ENCODE measurements at regions of chr17 and their contacts with region 1.

Region 1: DNA sequence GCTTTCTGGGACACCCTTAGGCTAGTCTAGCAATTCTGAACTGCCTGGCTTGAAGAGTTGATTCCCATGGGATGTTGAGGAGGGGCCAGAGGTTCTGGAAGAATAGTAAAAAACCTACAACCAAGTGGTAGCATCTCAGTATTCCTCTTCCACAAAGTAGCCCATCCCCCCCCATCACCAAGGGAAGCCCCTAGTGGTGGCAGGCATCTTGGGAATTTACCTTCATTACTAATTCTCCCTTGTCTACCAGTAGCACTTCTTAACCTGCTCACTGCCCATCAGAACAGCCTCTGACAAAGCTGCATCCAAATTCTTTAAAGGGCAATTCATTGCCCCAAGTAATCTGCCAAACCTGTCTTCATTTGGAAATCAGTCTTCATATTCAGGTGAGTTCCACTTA is 12.8 kb upstream of the RAB11FIP4 start:
- DNase-seq: no peak
- ATAC-seq: no peak
- H3K4me3 Mint-ChIP-seq: no peak overlapping the region
- H3K27ac Mint-ChIP-seq: no peak overlapping the region
- H3K4me1 Mint-ChIP-seq: no peaks in the 10 kb centered on the region
- H3K27me3 Mint-ChIP-seq: no peaks in the 10 kb centered on the region
- CTCF ChIP-seq: no peak

Region 2: DNA sequence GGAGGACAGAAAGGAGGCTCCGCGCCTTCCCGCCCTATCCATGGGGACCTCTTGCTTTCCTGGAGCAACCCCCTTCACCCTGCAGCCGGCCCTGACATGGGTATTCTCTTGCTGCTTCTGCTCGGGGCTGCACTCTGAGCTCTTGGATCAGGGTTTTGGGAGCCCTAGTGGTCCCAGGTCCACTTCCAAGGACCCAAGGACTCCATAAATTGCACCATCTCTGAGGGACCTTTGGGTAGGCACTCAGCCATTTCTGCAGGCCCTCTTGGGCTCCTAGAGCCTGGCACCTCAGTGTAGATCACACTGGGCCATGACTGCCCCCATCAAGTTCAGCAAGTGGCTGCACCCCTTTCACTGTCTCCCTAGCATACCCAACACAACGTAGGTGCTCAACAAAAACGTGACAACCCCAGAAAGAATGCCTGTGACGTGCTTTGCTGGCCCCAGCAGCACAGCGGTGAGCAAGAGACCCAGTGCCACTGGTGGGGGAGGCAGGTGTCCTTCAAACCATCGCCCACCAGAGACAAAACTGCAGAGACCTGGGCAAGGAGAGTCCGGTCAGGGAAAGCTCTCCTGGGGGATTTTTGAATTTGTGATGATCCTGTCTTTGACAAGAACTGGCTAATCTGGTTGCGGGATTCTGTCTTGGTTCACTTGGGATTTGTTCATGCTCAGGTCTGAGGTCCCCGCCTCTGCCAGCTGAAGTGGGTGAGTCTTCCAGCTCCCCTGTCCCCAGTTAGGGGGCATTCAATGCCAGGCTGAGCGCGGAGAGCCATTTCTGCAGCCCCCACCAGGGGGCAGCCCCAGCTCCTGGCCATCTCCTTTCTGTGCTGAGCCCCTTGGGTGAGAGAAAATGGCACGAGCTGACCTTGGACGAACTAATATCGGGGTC is 10.4 kb after region 1 on chr17:
- CTCF ChIA-PET with region 1: interaction called, 11 read pairs
- POLR2A ChIA-PET with region 1: no interaction called
- intact Hi-C with region 1: no loop called
- DNase-seq: peak; percentile 59
- ATAC-seq: peak; percentile 69
- H3K4me3 Mint-ChIP-seq: no peak overlapping the region
- H3K27ac Mint-ChIP-seq: no peak overlapping the region
- H3K4me1 Mint-ChIP-seq: peaks cover 5% of the 10 kb centered on the region
- H3K27me3 Mint-ChIP-seq: peaks cover 38% of the 10 kb centered on the region
- CTCF ChIP-seq: peak; percentile 87